PC-3 (cell line): ENCODE measurements at regions of chr1 and their contacts with region 1.

Region 1: GRCh38 chr1:147640553-147641165 is 29.7 kb downstream of the ACP6 start:
- DNase-seq: peak; percentile 93
- ATAC-seq: peak; percentile 92
- H3K4me3 ChIP-seq: no peak overlapping the region
- H3K27ac ChIP-seq: no peak overlapping the region
- H3K4me1 ChIP-seq: peaks cover 15% of the 10 kb centered on the region; the same call in 1 of the 2 replicates
- H3K27me3 ChIP-seq: no peaks in the 10 kb centered on the region
- CTCF ChIP-seq: peak; percentile 96

Region 2: DNA sequence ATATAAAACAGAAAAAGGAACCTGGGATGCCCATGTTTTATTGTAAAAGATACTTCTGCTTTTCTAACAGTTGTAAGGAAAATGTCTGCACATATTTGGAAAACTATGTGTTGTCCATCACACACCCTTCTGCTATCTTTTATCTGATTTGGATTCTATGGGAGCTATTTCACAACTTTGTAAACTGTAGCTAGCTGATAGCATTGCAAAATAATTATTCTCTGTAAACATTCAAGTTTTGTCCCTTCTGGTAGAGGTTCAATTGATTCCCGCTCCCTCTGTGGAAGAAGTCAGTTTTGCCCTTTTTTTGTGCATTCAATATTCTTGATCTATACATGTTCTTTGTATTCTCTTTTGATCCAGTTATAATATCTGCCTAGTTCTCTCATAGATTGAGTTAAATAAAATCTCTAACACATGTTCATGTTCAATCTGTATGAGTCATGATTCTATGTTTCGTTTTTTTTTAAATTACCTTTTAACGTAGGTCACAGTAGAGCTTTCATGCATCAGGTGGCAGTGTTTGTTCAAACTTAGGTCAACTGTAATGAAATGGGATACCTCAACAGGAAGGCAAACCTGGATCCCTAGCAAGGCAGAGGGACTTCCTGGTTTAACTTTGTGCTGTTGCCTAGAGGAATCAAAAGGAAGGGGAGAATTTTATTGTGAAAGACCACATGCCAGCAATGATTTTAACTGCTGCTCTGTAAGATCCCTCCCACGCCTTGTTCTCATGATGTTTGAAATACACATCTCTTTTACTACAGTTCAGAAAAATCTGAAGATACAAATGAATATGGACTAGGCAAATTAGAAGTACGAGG is 125.4 kb before region 1 on chr1:
- CTCF ChIA-PET with region 1: no interaction called
- POLR2A ChIA-PET with region 1: interaction called, 3 read pairs
- intact Hi-C with region 1: loop called (anchors 1 kb)
- DNase-seq: peak; percentile 96
- ATAC-seq: peak; percentile 100
- H3K4me3 ChIP-seq: no peak overlapping the region
- H3K27ac ChIP-seq: peak overlapping the region; percentile 83
- H3K4me1 ChIP-seq: peaks cover 30% of the 10 kb centered on the region
- H3K27me3 ChIP-seq: no peaks in the 10 kb centered on the region
- CTCF ChIP-seq: peak; percentile 82

Region 3: GRCh38 chr1:147670317-147671041 is 29.8 kb after region 1 on chr1 and contains the start of gene ACP6:
- CTCF ChIA-PET with region 1: no interaction called
- POLR2A ChIA-PET with region 1: no interaction called
- intact Hi-C with region 1: loop called (anchors 1 kb)
- DNase-seq: peak; percentile 98
- ATAC-seq: peak; percentile 95
- H3K4me3 ChIP-seq: peak within 1 kb of the TSS; percentile 73
- H3K27ac ChIP-seq: peak within 1 kb of the TSS; percentile 61
- H3K4me1 ChIP-seq: peaks cover 54% of the 10 kb centered on the region
- H3K27me3 ChIP-seq: no peaks in the 10 kb centered on the region
- CTCF ChIP-seq: no peak
- total RNA-seq, gene ACP6: 51.2 and 58.2 TPM in 2 replicates

Region 4: DNA sequence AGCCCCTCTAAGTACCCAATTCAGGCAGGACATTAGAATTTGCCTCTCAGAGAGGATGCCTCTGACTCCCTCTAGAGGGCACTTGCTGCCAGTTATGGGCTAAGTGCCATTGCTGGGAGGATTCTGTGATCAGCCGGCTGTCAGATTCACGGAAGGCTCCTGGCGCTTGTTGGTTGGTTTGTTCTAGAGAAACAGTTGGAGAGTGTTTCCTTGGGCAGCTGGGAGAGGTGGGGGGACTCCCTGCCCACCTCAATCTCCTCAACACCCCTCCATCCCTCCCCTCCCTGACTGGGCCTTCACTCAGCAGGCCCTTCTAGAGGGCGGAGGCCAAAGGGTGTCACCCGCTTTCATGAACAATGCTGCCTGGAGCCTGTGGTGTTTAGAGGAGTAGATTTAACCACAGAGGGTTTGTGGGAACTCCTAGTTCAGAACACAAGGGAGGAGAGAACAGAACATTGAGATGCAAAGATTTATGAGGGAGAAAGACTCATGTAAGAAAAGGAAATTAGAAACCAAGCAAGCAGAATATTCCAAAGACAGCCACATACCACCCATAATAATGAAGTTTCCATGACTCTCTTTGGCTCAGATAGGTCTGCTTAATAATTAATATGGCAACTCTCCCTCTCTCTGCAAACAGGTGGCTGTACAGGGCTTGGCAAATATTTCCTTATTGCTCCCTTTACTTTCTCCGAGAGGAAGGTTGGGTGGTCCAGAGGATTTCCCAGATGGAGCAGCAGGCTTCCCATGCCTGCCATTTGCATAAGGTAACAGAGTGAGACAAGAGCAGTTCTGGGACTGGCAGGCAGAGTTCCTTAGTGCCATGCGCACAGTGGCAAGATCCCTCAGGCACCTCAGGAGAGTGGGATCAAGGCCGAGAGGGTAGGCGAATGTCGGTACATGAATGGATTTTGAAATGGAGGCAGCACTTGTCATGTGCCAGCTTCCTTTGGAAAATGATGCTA is 59.7 kb after region 1 on chr1:
- CTCF ChIA-PET with region 1: no interaction called
- POLR2A ChIA-PET with region 1: no interaction called
- intact Hi-C with region 1: loop called (anchors 2 kb)
- DNase-seq: peak; percentile 87
- ATAC-seq: peak; percentile 88
- H3K4me3 ChIP-seq: no peak overlapping the region
- H3K27ac ChIP-seq: no peak overlapping the region
- H3K4me1 ChIP-seq: peaks cover 6% of the 10 kb centered on the region
- H3K27me3 ChIP-seq: no peaks in the 10 kb centered on the region
- CTCF ChIP-seq: peak; percentile 99

Region 5: GRCh38 chr1:147850759-147851508 is 210.3 kb after region 1 on chr1:
- CTCF ChIA-PET with region 1: interaction called, 14 read pairs
- POLR2A ChIA-PET with region 1: no interaction called
- intact Hi-C with region 1: no loop called
- DNase-seq: peak; percentile 94
- ATAC-seq: peak; percentile 84
- H3K4me3 ChIP-seq: no peak overlapping the region
- H3K27ac ChIP-seq: peak overlapping the region; percentile 36
- H3K4me1 ChIP-seq: peaks cover 43% of the 10 kb centered on the region
- H3K27me3 ChIP-seq: no peaks in the 10 kb centered on the region
- CTCF ChIP-seq: no peak